CD8-positive, alpha-beta T cell (primary cell): ENCODE measurements at regions of chr19 and their contacts with region 1.

Region 1: DNA sequence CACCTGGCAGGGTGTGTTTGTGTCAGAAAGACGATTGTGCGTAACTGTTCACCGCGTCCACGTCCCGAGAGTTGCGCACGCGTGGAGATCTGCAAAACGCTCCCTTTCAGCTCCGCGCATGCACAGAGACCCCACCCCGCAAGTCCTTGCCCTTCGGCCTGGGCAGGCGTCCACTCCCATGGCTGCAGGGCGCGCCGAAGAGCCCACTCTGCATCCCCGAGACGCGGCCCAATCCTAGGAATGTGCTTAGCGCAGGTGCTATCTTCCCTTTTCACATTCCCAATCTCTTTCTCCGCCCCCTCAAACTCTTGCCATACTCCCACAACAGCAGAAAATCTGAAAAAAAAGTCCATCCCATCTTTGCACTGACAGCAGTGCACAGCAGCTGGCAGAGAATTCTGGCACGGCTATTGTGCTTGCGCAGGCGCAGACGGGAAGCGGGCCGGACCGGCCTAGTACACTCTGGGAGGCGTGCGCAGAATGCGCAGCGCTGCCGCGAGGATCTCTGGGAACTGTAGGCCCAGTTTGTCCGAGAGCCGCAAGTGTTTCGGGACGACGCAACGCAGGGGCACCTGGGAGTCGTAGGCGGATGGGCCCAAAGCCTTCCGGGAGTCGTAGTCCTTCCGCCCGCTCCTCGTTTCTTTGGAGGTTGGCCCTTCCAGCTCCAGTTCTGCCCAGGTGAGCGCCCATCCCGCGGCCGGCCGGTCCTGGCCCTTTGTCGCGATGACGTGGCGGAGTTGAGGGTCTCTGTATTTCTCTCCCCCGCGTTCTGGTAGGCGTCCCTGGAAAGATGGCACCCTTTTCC is 23.1 kb downstream of the ZNF175 start:
- DNase-seq: peak; percentile 86 to 97 (median 96)
- ATAC-seq: peak; percentile 100
- H3K4me3 ChIP-seq: peak overlapping the region; percentile 69 to 98
- H3K4me3 Mint-ChIP-seq: peak overlapping the region; percentile 99
- H3K27ac ChIP-seq: peak overlapping the region; percentile 50 to 73
- H3K27ac Mint-ChIP-seq: peak overlapping the region; percentile 87
- H3K4me1 ChIP-seq: peaks cover 18% of the 10 kb centered on the region
- H3K4me1 Mint-ChIP-seq: peaks cover 27% of the 10 kb centered on the region
- H3K27me3 ChIP-seq: no peaks in the 10 kb centered on the region
- H3K27me3 Mint-ChIP-seq: peaks cover 10% of the 10 kb centered on the region
- CTCF ChIP-seq: no peak

Region 2: DNA sequence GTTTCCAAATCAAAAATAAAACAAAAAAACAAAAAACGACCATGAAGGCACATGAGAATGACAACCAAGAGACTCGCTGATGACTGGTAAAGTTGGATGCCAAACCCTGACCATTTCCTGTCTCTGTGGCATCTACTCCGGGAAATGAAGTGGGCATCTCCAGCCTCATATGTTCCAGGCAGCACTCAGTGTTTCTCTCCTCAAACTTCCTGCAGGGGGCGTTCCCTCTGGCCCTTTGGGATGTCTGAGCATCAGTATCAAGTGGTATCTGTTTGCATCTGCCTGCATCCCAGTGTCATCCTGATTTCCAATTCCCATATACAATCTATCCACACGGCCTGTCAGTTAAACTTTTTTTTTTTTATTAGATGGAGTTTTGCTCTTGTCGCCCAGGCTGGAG is 82.8 kb before region 1 on chr19:
- CTCF ChIA-PET with region 1: no interaction called
- POLR2A ChIA-PET with region 1: no interaction called
- intact Hi-C with region 1: no loop called
- DNase-seq: no peak
- ATAC-seq: no peak
- H3K4me3 ChIP-seq: no peak overlapping the region
- H3K4me3 Mint-ChIP-seq: no peak overlapping the region
- H3K27ac ChIP-seq: no peak overlapping the region
- H3K27ac Mint-ChIP-seq: no peak overlapping the region
- H3K4me1 ChIP-seq: no peaks in the 10 kb centered on the region
- H3K4me1 Mint-ChIP-seq: no peaks in the 10 kb centered on the region
- H3K27me3 ChIP-seq: no peaks in the 10 kb centered on the region
- H3K27me3 Mint-ChIP-seq: peaks cover 22% of the 10 kb centered on the region
- CTCF ChIP-seq: no peak

Region 3: GRCh38 chr19:51570962-51571575 is 23.1 kb before region 1 on chr19 and contains the start of gene ZNF175:
- CTCF ChIA-PET with region 1: no interaction called
- POLR2A ChIA-PET with region 1: no interaction called
- intact Hi-C with region 1: loop called (anchors 1 kb)
- DNase-seq: peak; percentile 70 to 94 (median 87)
- ATAC-seq: peak; percentile 98
- H3K4me3 ChIP-seq: peak within 1 kb of the TSS; percentile 65 to 80
- H3K4me3 Mint-ChIP-seq: peak within 1 kb of the TSS; percentile 97
- H3K27ac ChIP-seq: no peak within 1 kb of the TSS
- H3K27ac Mint-ChIP-seq: peak within 1 kb of the TSS; percentile 85
- H3K4me1 ChIP-seq: peaks cover 19% of the 10 kb centered on the region
- H3K4me1 Mint-ChIP-seq: peaks cover 41% of the 10 kb centered on the region
- H3K27me3 ChIP-seq: no peaks in the 10 kb centered on the region
- H3K27me3 Mint-ChIP-seq: peaks cover 4% of the 10 kb centered on the region
- CTCF ChIP-seq: no peak
- total RNA-seq, gene ZNF175: 0.84 to 1.4 TPM

Region 4: GRCh38 chr19:51644636-51645271 is 50.6 kb after region 1 on chr19:
- CTCF ChIA-PET with region 1: no interaction called
- POLR2A ChIA-PET with region 1: no interaction called
- intact Hi-C with region 1: no loop called
- DNase-seq: no peak
- ATAC-seq: no peak
- H3K4me3 ChIP-seq: no peak overlapping the region
- H3K4me3 Mint-ChIP-seq: no peak overlapping the region
- H3K27ac ChIP-seq: no peak overlapping the region
- H3K27ac Mint-ChIP-seq: no peak overlapping the region
- H3K4me1 ChIP-seq: no peaks in the 10 kb centered on the region
- H3K4me1 Mint-ChIP-seq: no peaks in the 10 kb centered on the region
- H3K27me3 ChIP-seq: no peaks in the 10 kb centered on the region
- H3K27me3 Mint-ChIP-seq: peaks cover 43% of the 10 kb centered on the region
- CTCF ChIP-seq: no peak